GM12878 (cell line): ENCODE measurements at regions of chr1 and their contacts with region 1.

Region 1: DNA sequence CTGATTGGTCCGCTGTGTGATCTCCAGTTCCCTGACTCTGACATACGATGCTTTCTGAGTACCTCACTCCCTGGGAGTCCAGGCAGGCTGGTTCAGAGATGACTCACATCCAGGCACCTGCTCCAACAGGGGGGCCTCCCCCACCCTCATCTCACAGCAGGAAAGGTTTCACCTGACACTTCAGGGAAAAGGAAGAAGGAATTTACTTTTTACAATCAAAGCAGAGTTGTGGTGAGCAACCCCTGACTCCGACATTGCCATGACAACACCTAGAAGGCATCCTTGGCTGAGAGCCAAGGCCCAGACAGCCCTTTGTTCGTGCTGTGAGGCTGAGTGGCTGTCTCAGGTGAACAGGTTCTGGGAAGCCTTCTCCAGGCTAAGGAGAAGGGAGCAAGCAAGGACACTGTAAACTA is 164.6 kb upstream of the GJB5 start:
- DNase-seq: peak; percentile 16
- ATAC-seq: no peak
- H3K4me3 ChIP-seq: no peak overlapping the region
- H3K27ac ChIP-seq: no peak overlapping the region
- H3K4me1 ChIP-seq: peaks cover 10% of the 10 kb centered on the region; the same call in 1 of the 2 replicates
- H3K27me3 ChIP-seq: no peaks in the 10 kb centered on the region
- CTCF ChIP-seq: no peak
- EP300 ChIP-seq: no peak
- POLR2A ChIP-seq: no peak
- RAD21 ChIP-seq: no peak

Region 2: DNA sequence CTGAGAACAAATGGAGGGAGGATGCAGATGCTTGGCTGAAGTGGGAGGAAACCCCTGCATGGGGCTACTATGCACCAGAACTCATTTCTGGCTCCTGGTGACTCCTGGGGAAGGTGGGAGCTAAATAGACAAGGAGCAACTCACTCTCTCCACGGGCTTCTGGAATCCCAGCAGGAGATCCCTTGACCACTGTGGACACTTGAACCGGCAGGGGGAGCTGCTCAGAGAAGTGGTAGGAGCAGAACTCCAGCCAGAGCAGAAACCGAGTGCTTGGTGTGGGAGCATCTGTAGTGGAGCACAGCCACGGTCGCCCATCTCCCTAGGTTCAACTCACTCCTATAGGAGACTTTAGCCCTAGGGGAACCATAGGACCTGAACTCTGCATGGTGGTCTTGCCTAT is 41.0 kb before region 1 on chr1:
- CTCF ChIA-PET with region 1: interaction called, 6 read pairs
- POLR2A ChIA-PET with region 1: no interaction called
- RAD21 ChIA-PET with region 1: no interaction called
- SMC1A ChIA-PET with region 1: interaction called, 3 read pairs
- in situ Hi-C with region 1: loop called (anchors 5 kb)
- intact Hi-C with region 1: no loop called
- DNase-seq: no peak
- ATAC-seq: no peak
- H3K4me3 ChIP-seq: no peak overlapping the region
- H3K27ac ChIP-seq: no peak overlapping the region
- H3K4me1 ChIP-seq: no peaks in the 10 kb centered on the region
- H3K27me3 ChIP-seq: no peaks in the 10 kb centered on the region
- CTCF ChIP-seq: peak; percentile 16 to 33 (median 17); a peak in 4 of 6 replicates
- EP300 ChIP-seq: no peak
- POLR2A ChIP-seq: no peak
- RAD21 ChIP-seq: no peak

Region 3: GRCh38 chr1:34617321-34618118 is 27.3 kb after region 1 on chr1:
- CTCF ChIA-PET with region 1: no interaction called
- POLR2A ChIA-PET with region 1: no interaction called
- RAD21 ChIA-PET with region 1: no interaction called
- SMC1A ChIA-PET with region 1: no interaction called
- in situ Hi-C with region 1: no loop called
- intact Hi-C with region 1: no loop called
- DNase-seq: no peak
- ATAC-seq: no peak
- H3K4me3 ChIP-seq: no peak overlapping the region
- H3K27ac ChIP-seq: no peak overlapping the region
- H3K4me1 ChIP-seq: no peaks in the 10 kb centered on the region
- H3K27me3 ChIP-seq: peaks cover 0 to 8% of the 10 kb centered on the region in 2 experiments; a peak in 3 of 4 replicates
- CTCF ChIP-seq: no peak
- EP300 ChIP-seq: no peak
- POLR2A ChIP-seq: no peak
- RAD21 ChIP-seq: no peak